Activated CD8-positive, alpha-beta T cell treated with anti-CD3 and anti-CD28 coated beads, Interleukin-2, amount 10 ng/mL, durations not matched to agents 7 days and 5 days (primary cell): ENCODE measurements at regions of chr14 and their contacts with region 1.

Region 1: GRCh38 chr14:22852940-22853767 is 16.8 kb downstream of the MMP14 start:
- DNase-seq: peak; percentile 91
- ATAC-seq: peak; percentile 87
- H3K4me3 Mint-ChIP-seq: peak overlapping the region; percentile 72
- H3K27ac Mint-ChIP-seq: peak overlapping the region; percentile 61
- H3K4me1 Mint-ChIP-seq: peaks cover 44% of the 10 kb centered on the region
- H3K27me3 Mint-ChIP-seq: peaks cover 18% of the 10 kb centered on the region

Region 2: DNA sequence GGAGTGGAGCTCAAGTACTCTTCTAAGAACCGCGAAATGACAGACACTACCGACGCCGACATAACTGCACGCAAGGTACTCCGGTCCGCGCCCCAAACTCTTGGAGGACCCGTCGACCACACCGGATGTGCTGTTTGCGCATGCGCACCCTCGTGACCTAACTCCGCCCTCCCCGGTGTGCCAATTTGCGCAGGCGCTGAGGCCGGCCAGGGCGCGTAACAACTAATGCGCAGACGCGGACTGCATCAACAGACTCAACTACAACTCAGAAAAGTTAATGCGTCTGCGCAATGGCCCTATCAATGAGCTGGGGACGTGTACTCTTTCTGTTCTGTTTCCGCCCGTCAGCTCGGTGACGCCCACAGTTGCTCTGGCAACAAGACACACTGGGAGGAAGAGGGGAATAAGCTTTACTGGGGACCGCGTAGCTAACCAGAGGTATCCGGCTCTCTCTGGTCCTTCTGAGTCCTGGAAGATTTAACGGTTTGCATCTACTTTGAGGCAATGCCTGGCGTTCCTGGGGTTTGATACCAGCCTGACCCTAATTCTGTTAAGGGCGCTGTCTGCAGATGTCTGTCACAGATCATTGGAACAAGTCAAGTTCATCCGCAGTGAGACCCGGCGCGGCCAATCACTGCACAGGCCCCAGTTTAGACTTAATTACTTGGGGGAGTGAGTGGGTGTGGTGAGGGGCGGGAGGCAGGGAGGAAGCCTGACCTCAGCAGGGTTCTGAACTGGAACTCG is 263.9 kb before region 1 on chr14 and contains the start of gene DAD1:
- CTCF ChIA-PET with region 1: interaction called, 23 read pairs
- POLR2A ChIA-PET with region 1: interaction called, 4 read pairs
- DNase-seq: peak; percentile 100
- ATAC-seq: peak; percentile 91
- H3K4me3 Mint-ChIP-seq: peak within 1 kb of the TSS; percentile 99
- H3K27ac Mint-ChIP-seq: peak within 1 kb of the TSS; percentile 100
- H3K4me1 Mint-ChIP-seq: peaks cover 55% of the 10 kb centered on the region
- H3K27me3 Mint-ChIP-seq: peaks cover 8% of the 10 kb centered on the region
- total RNA-seq, gene DAD1: 130 to 147 TPM

Region 3: DNA sequence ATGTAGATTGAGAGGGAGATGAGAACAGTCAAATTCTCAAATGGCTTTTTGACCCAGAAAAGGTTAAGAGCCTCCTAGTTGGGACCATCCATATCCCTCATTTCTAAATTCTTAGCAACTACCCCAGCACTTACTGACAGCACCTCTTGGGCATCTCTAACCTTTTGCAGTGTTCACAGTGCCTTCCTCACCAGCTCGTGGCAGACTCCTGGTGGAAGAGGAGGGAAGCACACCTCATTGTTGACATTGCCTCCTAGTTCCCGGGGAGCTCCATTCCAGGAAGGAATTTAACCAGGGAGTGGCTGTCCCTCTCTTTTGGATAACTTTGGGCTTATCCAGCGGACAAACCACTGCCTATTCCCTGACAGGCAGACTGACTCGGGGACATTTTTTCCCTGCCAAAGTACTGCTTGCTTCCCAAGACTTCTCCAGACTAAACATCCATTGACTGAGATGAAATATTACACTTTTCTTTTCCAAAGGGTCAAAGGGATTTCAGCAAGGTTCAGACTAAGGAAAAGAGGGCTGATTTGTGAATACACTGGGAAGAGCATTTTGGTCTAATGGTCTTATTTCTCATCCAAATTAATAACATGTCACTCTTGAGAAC is 200.0 kb before region 1 on chr14:
- CTCF ChIA-PET with region 1: interaction called, 11 read pairs
- POLR2A ChIA-PET with region 1: no interaction called
- DNase-seq: peak; percentile 63
- ATAC-seq: peak; percentile 87
- H3K4me3 Mint-ChIP-seq: no peak overlapping the region
- H3K27ac Mint-ChIP-seq: no peak overlapping the region
- H3K4me1 Mint-ChIP-seq: peaks cover 18% of the 10 kb centered on the region
- H3K27me3 Mint-ChIP-seq: peaks cover 2% of the 10 kb centered on the region

Region 4: GRCh38 chr14:22766456-22767322 is 86.5 kb before region 1 on chr14 and contains the start of gene OXA1L:
- CTCF ChIA-PET with region 1: interaction called, 16 read pairs
- POLR2A ChIA-PET with region 1: no interaction called
- DNase-seq: peak; percentile 98
- ATAC-seq: peak; percentile 94
- H3K4me3 Mint-ChIP-seq: peak within 1 kb of the TSS; percentile 93
- H3K27ac Mint-ChIP-seq: peak within 1 kb of the TSS; percentile 97
- H3K4me1 Mint-ChIP-seq: peaks cover 33% of the 10 kb centered on the region
- H3K27me3 Mint-ChIP-seq: no peaks in the 10 kb centered on the region
- total RNA-seq, gene OXA1L: 104 to 107 TPM

Region 5: GRCh38 chr14:22791301-22791700 is 61.9 kb before region 1 on chr14:
- CTCF ChIA-PET with region 1: no interaction called
- POLR2A ChIA-PET with region 1: no interaction called
- DNase-seq: no peak
- ATAC-seq: no peak
- H3K4me3 Mint-ChIP-seq: no peak overlapping the region
- H3K27ac Mint-ChIP-seq: no peak overlapping the region
- H3K4me1 Mint-ChIP-seq: peaks cover 4% of the 10 kb centered on the region
- H3K27me3 Mint-ChIP-seq: peaks cover 12% of the 10 kb centered on the region

Region 6: DNA sequence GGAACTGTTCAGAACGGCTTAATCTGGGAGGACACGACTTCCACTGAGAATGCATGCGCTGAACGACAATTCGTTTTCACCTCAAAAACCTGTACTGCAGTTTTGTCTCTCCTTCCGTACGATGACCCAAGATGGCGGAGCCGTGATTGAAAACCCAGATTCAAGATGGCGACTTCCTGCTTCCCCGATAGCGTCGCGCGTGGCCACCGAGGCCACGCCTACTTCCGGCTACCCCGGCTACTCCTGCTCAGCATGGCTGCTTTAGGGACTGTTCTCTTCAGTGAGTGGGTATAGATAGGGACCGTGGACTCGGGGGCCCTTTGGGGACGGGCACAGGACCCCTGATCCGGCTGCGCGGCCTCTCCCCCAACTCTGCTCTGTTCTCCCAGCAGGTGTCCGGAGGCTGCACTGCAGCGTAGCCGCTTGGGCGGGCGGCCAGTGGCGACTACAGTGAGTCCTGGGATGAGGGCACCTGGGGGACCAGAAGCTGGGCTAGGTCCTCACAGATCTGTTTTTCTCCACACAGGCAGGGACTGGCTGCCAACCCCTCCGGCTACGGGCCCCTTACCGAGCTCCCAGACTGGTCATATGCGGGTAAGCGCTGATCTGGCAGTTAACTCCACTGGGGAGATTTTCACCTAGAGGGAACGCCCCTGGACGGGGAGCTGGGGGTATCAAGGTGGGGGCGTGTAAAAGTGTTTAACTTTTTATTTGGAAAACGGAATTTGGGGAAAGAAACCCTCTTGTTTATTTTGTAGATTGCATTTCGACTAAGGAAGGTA is 23.3 kb before region 1 on chr14 and contains the start of gene MRPL52:
- CTCF ChIA-PET with region 1: interaction called, 590 read pairs
- POLR2A ChIA-PET with region 1: interaction called, 10 read pairs
- DNase-seq: peak; percentile 95
- ATAC-seq: peak; percentile 93
- H3K4me3 Mint-ChIP-seq: peak within 1 kb of the TSS; percentile 95
- H3K27ac Mint-ChIP-seq: peak within 1 kb of the TSS; percentile 96
- H3K4me1 Mint-ChIP-seq: peaks cover 32% of the 10 kb centered on the region
- H3K27me3 Mint-ChIP-seq: no peaks in the 10 kb centered on the region
- total RNA-seq, gene MRPL52: 93.9 to 97.3 TPM

Region 7: DNA sequence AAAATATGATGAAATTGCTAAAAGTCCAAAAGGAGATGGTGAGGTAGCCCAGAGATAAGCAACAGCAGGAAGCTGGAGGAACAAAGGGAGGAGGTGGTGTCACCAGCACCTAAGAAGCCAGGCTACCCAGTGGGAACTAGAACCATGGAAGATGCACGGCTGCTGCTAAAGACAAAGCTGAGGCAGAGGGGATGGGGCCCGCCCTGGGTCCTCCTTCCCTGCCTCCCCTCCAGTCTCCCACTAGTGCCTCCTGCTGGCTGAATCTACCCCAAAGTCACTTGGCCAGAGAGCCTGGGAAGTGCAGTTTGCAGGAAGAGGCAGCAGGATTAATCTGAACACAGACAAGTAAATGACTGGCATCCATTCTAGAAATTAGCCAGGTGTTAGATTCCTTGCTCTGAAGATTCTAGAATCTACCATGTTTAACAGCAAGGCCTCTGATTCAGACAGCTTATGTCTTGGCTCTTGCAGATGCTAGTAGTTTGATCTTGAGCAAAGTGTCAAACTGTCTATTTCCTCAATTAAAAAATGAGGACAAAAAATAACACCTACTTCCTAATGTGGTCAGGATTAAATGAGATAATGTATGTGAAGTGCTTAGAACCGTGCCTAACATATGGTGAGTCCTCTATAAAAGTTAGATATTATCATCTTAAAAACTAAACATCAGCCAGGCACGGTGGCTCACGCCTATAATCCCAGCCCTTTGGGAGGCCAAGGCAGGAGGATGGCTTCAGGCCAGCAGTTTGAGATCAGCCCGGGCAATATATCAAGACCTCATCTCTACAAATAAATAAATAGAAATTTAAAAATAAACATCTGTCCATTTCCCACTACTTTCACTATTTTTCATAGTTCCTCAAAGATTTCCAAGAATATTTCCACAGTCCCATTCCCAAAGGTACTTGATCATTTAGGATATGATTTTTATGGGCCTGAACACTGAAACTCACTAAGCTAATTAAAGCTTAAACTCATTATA is 12.6 kb after region 1 on chr14:
- CTCF ChIA-PET with region 1: interaction called, 89 read pairs
- POLR2A ChIA-PET with region 1: no interaction called
- DNase-seq: no peak
- ATAC-seq: no peak
- H3K4me3 Mint-ChIP-seq: no peak overlapping the region
- H3K27ac Mint-ChIP-seq: no peak overlapping the region
- H3K4me1 Mint-ChIP-seq: peaks cover 6% of the 10 kb centered on the region
- H3K27me3 Mint-ChIP-seq: peaks cover 31% of the 10 kb centered on the region

Region 8: GRCh38 chr14:22900081-22900799 is 47.1 kb after region 1 on chr14:
- CTCF ChIA-PET with region 1: interaction called, 27 read pairs
- POLR2A ChIA-PET with region 1: no interaction called
- DNase-seq: peak; percentile 68
- ATAC-seq: peak; percentile 75
- H3K4me3 Mint-ChIP-seq: no peak overlapping the region
- H3K27ac Mint-ChIP-seq: peak overlapping the region; percentile 4
- H3K4me1 Mint-ChIP-seq: peaks cover 13% of the 10 kb centered on the region
- H3K27me3 Mint-ChIP-seq: no peaks in the 10 kb centered on the region

Region 9: GRCh38 chr14:23344442-23344841 is 491.3 kb after region 1 on chr14:
- CTCF ChIA-PET with region 1: no interaction called
- POLR2A ChIA-PET with region 1: no interaction called
- DNase-seq: no peak
- ATAC-seq: no peak
- H3K4me3 Mint-ChIP-seq: no peak overlapping the region
- H3K27ac Mint-ChIP-seq: no peak overlapping the region
- H3K4me1 Mint-ChIP-seq: no peaks in the 10 kb centered on the region
- H3K27me3 Mint-ChIP-seq: peaks cover 6% of the 10 kb centered on the region